ENCODE measurements at regions of chr20 and their contacts with region 1.

Region 1: GRCh38 chr20:32819992-32820710 is 397 bp downstream of the MAPRE1 start:
- DNase-seq: peak; percentile 83 to 92 (median 87)
- ATAC-seq: peak; percentile 91
- H3K4me3 ChIP-seq: peak overlapping the region; percentile 91
- H3K27ac ChIP-seq: peak overlapping the region; percentile 95
- H3K4me1 ChIP-seq: peaks cover 26 to 29% of the 10 kb centered on the region in 2 experiments
- H3K27me3 ChIP-seq: no peaks in the 10 kb centered on the region
- CTCF ChIP-seq: 0 out of 6 replicates have a peak, but pooled peaks of 1 of the 3 experiments have one; percentile 2
- EP300 ChIP-seq: no peak
- POLR2A ChIP-seq: peak; percentile 61
- RAD21 ChIP-seq: no peak

Region 2: DNA sequence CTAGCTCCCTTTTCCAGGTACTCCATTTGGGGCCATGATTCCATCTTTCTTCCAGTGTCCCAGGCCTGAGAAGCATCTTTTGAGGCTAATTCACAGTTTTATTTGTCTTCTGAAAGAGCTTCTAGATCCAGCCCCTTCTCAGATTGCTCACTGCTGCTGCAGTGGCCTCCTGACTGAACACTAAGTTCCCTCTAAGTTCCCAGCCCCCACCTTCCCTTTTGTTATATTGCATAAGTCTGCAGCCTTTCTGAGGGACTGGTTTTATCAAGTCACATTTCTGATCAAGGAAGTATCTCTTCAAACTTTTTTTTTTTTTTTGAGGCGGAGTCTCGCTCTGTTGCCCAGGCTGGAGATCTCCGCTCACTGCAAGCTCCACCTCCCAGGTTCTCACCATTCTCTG is 10.3 kb after region 1 on chr20:
- CTCF ChIA-PET with region 1: interaction called, 6 read pairs
- POLR2A ChIA-PET with region 1: interaction called, 38 read pairs
- in situ Hi-C with region 1: no loop called
- intact Hi-C with region 1: no loop called
- DNase-seq: no peak
- ATAC-seq: no peak
- H3K4me3 ChIP-seq: no peak overlapping the region
- H3K27ac ChIP-seq: no peak overlapping the region
- H3K4me1 ChIP-seq: no peaks in the 10 kb centered on the region
- H3K27me3 ChIP-seq: no peaks in the 10 kb centered on the region
- CTCF ChIP-seq: no peak
- EP300 ChIP-seq: no peak
- POLR2A ChIP-seq: no peak
- RAD21 ChIP-seq: no peak

Region 3: DNA sequence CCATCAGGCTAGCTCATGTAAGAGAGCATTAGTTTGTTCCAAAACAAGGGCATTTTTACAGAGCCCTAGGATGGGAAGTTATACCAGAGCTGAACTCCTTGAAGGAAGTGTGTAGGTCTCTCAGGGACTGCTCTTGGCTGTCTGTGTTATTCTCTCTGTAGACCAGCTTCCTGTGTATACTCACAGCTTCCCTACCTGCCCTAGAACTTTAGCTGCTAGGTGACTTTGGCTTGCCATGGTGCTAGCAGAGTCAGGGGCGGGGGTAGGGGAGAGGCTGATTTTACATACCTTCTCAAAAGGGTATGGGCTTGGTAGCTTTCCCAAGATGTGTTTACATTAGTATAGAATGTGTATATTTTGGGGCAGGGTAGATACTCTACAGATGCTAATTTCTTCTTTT is 17.0 kb after region 1 on chr20:
- CTCF ChIA-PET with region 1: interaction called, 6 read pairs
- POLR2A ChIA-PET with region 1: interaction called, 21 read pairs
- in situ Hi-C with region 1: no loop called
- intact Hi-C with region 1: no loop called
- DNase-seq: no peak
- ATAC-seq: no peak
- H3K4me3 ChIP-seq: no peak overlapping the region
- H3K27ac ChIP-seq: no peak overlapping the region
- H3K4me1 ChIP-seq: no peaks in the 10 kb centered on the region
- H3K27me3 ChIP-seq: no peaks in the 10 kb centered on the region
- CTCF ChIP-seq: no peak
- EP300 ChIP-seq: no peak
- POLR2A ChIP-seq: no peak
- RAD21 ChIP-seq: no peak

Region 4: DNA sequence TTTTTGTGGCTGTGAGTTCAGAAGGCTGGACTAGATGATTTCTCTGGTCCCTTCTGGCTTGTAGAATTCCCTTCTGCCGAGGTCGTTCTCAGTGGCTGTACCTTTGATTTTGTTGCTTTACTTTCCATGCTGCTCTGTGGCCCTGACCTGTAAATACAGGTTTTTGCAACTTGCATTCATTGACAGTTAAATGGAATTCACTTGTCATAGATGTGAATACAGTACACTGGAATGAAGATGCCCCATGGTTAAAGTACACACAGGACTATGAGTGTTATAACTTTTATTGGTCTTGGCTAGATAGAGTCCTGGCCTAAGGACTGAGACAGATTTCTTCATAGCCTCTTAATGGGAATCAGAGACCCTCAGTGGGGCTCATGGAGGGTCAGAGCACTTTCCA is 25.6 kb after region 1 on chr20:
- CTCF ChIA-PET with region 1: no interaction called
- POLR2A ChIA-PET with region 1: interaction called, 13 read pairs
- in situ Hi-C with region 1: no loop called
- intact Hi-C with region 1: no loop called
- DNase-seq: no peak
- ATAC-seq: no peak
- H3K4me3 ChIP-seq: no peak overlapping the region
- H3K27ac ChIP-seq: no peak overlapping the region
- H3K4me1 ChIP-seq: no peaks in the 10 kb centered on the region
- H3K27me3 ChIP-seq: no peaks in the 10 kb centered on the region
- CTCF ChIP-seq: no peak
- EP300 ChIP-seq: no peak
- POLR2A ChIP-seq: no peak
- RAD21 ChIP-seq: no peak

Region 5: DNA sequence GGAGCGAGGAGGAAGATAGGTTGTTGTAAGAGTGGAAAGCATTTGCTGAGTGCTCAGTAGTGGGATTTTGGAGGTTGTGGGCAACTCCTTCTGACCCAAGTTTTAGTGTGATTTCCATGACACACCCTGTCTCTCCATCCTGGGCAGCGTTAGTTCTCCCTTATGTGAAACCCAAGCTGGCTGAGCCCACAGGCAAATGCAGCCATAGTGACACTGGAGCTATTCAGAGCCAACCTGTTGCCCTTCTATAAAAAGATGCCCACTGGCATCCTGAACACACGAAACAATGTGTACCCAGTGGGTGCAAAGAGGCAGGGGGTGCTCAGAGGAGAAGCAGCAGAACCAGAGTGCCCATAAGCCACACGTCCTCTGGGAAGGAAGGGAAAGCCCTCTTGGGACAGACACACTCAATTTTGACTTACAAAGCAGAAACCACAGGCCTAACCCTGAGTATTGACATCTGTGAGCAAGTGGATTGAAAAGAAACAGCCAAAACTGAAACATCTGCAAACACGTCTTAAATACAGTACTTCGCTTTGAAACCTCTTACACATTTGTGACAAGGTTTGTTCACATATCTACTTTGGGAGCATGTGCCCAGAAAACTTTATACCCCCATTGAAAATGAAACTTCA is 517.5 kb after region 1 on chr20:
- CTCF ChIA-PET with region 1: no interaction called
- POLR2A ChIA-PET with region 1: no interaction called
- in situ Hi-C with region 1: no loop called
- intact Hi-C with region 1: no loop called
- DNase-seq: no peak
- ATAC-seq: no peak
- H3K4me3 ChIP-seq: no peak overlapping the region
- H3K27ac ChIP-seq: no peak overlapping the region
- H3K4me1 ChIP-seq: peaks cover 10 to 16% of the 10 kb centered on the region in 2 experiments; a peak in 4 of 5 replicates
- H3K27me3 ChIP-seq: peaks cover 0 to 18% of the 10 kb centered on the region in 2 experiments; a peak in 2 of 5 replicates
- CTCF ChIP-seq: no peak
- EP300 ChIP-seq: no peak
- POLR2A ChIP-seq: no peak
- RAD21 ChIP-seq: no peak